Naive thymus-derived CD4-positive, alpha-beta T cell (primary cell): ENCODE measurements at regions of chr20 and their contacts with region 1.

Region 1: DNA sequence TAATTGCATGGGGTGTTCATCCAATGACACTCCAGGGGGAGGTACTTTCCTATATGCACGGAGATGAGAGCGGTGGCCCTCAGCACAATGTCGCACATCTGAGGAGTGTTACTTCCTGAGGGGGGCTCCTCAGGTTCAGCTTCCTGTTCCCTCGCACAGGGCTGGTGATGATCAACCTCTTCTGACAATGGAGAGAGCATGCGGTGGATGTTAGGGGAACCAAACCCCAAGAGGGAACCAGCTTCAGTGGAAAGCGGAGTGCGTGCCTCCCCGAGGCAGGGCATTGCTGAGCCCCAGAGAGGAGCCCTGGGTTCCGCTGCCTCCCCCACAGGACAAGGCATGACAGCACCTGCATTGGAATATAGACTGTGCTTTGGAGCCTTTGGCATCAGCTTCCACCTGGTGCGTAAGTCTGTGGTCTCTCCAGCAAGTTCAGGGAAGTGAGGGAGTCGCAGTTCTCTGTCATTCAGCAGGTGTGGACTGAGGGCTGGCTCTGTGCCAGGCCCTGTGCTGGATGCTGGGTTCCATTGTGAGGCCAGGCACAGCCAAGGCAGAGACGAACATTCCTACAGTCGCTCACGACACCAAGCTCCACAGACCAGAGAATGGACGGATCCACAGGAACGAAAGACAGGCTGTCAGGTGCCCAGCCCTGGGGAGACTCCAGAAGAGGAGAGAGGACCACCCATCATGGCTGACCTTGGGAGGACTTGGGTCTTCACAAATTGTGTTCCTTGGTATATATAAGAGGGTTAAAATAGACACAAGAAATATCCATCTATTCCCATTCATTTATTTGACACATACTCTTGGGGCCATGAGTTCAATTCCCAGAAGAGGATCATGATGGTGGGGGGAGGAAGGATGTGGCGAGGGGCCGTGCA is 3.9 kb upstream of the ZNF831 start:
- DNase-seq: peak in 8 of 9 donors; percentile 50 to 86 (median 82)
- ATAC-seq: peak; percentile 93
- H3K4me3 ChIP-seq: peak overlapping the region; percentile 55
- H3K4me3 Mint-ChIP-seq: peak overlapping the region; percentile 76 to 93 (median 89)
- H3K27ac ChIP-seq: peak overlapping the region; percentile 93
- H3K27ac Mint-ChIP-seq: peak overlapping the region; percentile 95 to 99 (median 98)
- H3K4me1 ChIP-seq: peaks cover 55 to 79% of the 10 kb centered on the region in 2 donors
- H3K4me1 Mint-ChIP-seq: peaks cover 49 to 95% (median 89%) of the 10 kb centered on the region in 7 donors
- H3K27me3 ChIP-seq: no peaks in the 10 kb centered on the region
- H3K27me3 Mint-ChIP-seq: no peaks in the 10 kb centered on the region

Region 2: GRCh38 chr20:58818585-58819285 is 341.0 kb before region 1 on chr20:
- CTCF ChIA-PET with region 1: no interaction called
- POLR2A ChIA-PET with region 1: no interaction called
- intact Hi-C with region 1: no loop called
- DNase-seq: peak in 1 of 9 donors; percentile 74
- ATAC-seq: no peak
- H3K4me3 ChIP-seq: no peak overlapping the region
- H3K4me3 Mint-ChIP-seq: no peak overlapping the region
- H3K27ac ChIP-seq: no peak overlapping the region
- H3K27ac Mint-ChIP-seq: no peak overlapping the region
- H3K4me1 ChIP-seq: no peaks in the 10 kb centered on the region
- H3K4me1 Mint-ChIP-seq: peaks cover 0 to 11% (median 0%) of the 10 kb centered on the region in 7 donors
- H3K27me3 ChIP-seq: no peaks in the 10 kb centered on the region
- H3K27me3 Mint-ChIP-seq: peaks cover 0 to 14% (median 4%) of the 10 kb centered on the region in 5 donors

Region 3: GRCh38 chr20:59020938-59021551 is 138.7 kb before region 1 on chr20:
- CTCF ChIA-PET with region 1: no interaction called
- POLR2A ChIA-PET with region 1: no interaction called
- intact Hi-C with region 1: no loop called
- DNase-seq: no peak
- ATAC-seq: no peak
- H3K4me3 ChIP-seq: no peak overlapping the region
- H3K4me3 Mint-ChIP-seq: no peak overlapping the region
- H3K27ac ChIP-seq: no peak overlapping the region
- H3K27ac Mint-ChIP-seq: peak overlapping the region in 1 of 9 donors; percentile 67
- H3K4me1 ChIP-seq: peaks cover 0 to 12% of the 10 kb centered on the region in 2 donors
- H3K4me1 Mint-ChIP-seq: peaks cover 24 to 36% (median 32%) of the 10 kb centered on the region in 7 donors
- H3K27me3 ChIP-seq: no peaks in the 10 kb centered on the region
- H3K27me3 Mint-ChIP-seq: no peaks in the 10 kb centered on the region

Region 4: GRCh38 chr20:59042796-59043660 is 116.7 kb before region 1 on chr20:
- CTCF ChIA-PET with region 1: no interaction called
- POLR2A ChIA-PET with region 1: no interaction called
- intact Hi-C with region 1: loop called in 1 of 2 experiments (anchors 2 kb)
- DNase-seq: peak; percentile 90 to 98 (median 94)
- ATAC-seq: peak; percentile 98
- H3K4me3 ChIP-seq: peak overlapping the region; percentile 76
- H3K4me3 Mint-ChIP-seq: peak overlapping the region; percentile 81 to 96 (median 90)
- H3K27ac ChIP-seq: peak overlapping the region; percentile 93
- H3K27ac Mint-ChIP-seq: peak overlapping the region; percentile 76 to 96 (median 91)
- H3K4me1 ChIP-seq: peaks cover 30 to 32% of the 10 kb centered on the region in 2 donors
- H3K4me1 Mint-ChIP-seq: peaks cover 35 to 54% (median 50%) of the 10 kb centered on the region in 7 donors
- H3K27me3 ChIP-seq: no peaks in the 10 kb centered on the region
- H3K27me3 Mint-ChIP-seq: no peaks in the 10 kb centered on the region

Region 5: DNA sequence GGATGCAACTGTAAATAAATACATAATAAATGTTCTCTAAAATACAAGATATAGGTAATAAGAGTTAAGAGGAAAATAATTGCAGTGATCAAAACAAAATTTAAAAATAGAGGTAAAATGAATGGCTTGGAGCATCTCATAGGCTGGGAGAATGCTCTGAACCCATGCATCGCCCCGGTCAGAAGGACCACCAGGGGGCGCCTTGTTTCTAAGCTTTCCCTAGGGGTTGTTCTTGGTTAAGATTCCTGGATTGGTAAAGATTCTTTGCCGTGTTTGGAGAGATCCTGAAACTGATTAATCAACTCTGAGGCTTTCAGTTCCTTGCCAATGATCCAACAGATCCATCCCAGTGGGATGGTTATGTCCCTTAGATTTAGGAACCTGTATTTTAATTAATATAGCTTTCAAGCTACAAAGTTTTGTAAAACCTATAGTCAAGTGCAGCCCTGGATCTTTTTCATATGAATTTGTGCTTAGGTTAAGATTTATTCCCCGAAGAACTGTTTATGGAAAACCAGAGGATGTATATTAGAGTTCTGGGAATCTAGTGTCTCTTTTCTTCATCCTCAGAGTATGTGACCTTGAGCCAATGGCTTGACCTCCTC is 71.8 kb before region 1 on chr20:
- CTCF ChIA-PET with region 1: interaction called, 9 read pairs
- POLR2A ChIA-PET with region 1: interaction called, 7 read pairs
- intact Hi-C with region 1: loop called (anchors 1 to 5 kb)
- DNase-seq: peak; percentile 67 to 85 (median 78)
- ATAC-seq: peak; percentile 92
- H3K4me3 ChIP-seq: no peak overlapping the region
- H3K4me3 Mint-ChIP-seq: no peak overlapping the region
- H3K27ac ChIP-seq: no peak overlapping the region
- H3K27ac Mint-ChIP-seq: peak overlapping the region in 4 of 9 donors; percentile 10 to 58 (median 40)
- H3K4me1 ChIP-seq: peaks cover 0 to 5% of the 10 kb centered on the region in 2 donors
- H3K4me1 Mint-ChIP-seq: peaks cover 0 to 7% (median 5%) of the 10 kb centered on the region in 7 donors
- H3K27me3 ChIP-seq: no peaks in the 10 kb centered on the region
- H3K27me3 Mint-ChIP-seq: peaks cover 0 to 32% (median 0%) of the 10 kb centered on the region in 5 donors

Region 6: DNA sequence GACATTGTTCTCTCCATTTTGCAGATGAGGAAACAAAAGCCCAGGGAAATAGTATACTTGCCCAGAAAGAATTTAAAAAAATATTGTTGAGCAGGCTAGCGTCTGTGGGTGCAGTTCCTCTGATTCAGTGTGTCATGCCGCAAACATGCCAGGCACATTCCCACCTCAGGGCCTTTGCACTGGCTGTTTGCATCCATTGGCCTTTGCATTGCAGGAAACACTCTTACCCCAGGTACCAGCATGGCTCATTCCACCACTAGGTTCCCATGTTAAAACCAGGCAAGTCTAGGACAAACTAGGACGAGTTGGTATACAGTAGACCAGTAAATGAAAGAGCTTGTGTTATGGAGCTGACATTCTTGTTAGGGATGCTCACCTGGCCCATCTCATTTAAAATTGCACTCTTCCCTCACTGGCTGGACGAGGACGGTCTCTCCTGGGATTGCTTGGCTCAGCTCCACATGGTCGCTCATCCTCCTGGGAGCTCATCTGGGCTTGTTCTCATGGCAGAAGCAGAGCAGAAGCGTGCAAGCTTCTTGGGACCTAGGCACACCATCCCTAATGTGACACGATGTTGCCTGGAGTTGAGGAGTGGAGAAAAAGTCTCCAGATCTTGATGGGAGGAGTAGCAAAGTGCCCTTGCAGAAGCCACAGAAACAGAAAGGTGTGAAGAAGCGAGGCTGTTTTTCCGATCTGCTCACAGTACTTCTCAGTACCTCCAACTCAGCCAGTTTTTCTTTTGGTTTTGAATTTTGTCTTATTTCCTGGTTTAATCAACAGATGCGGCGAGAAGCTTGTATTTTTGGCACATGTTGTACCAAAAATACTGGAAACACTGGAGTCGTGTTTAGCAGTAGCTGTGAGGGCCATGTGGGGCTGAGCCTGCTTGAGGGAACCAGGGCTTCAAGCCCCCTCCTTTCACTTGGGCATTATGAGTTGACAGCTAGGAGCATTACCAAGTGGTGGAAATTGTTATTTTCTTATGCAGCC is 17.8 kb after region 1 on chr20:
- CTCF ChIA-PET with region 1: interaction called, 3 read pairs
- POLR2A ChIA-PET with region 1: interaction called, 16 read pairs
- intact Hi-C with region 1: loop called in 1 of 2 experiments (anchors 2 kb)
- DNase-seq: peak in 4 of 9 donors; percentile 28 to 46 (median 32)
- ATAC-seq: peak; percentile 75
- H3K4me3 ChIP-seq: peak overlapping the region; percentile 32
- H3K4me3 Mint-ChIP-seq: peak overlapping the region; percentile 40 to 83 (median 74)
- H3K27ac ChIP-seq: peak overlapping the region; percentile 71
- H3K27ac Mint-ChIP-seq: peak overlapping the region; percentile 86 to 96 (median 91)
- H3K4me1 ChIP-seq: peaks cover 72 to 81% of the 10 kb centered on the region in 2 donors
- H3K4me1 Mint-ChIP-seq: peaks cover 51 to 97% (median 88%) of the 10 kb centered on the region in 7 donors
- H3K27me3 ChIP-seq: no peaks in the 10 kb centered on the region
- H3K27me3 Mint-ChIP-seq: no peaks in the 10 kb centered on the region

Region 7: GRCh38 chr20:59253779-59254319 is 94.1 kb after region 1 on chr20:
- CTCF ChIA-PET with region 1: no interaction called
- POLR2A ChIA-PET with region 1: no interaction called
- intact Hi-C with region 1: loop called in 1 of 2 experiments (anchors 5 kb)
- DNase-seq: peak in 7 of 9 donors; percentile 10 to 41 (median 25)
- ATAC-seq: peak; percentile 63
- H3K4me3 ChIP-seq: peak overlapping the region; percentile 27
- H3K4me3 Mint-ChIP-seq: peak overlapping the region; percentile 66 to 83 (median 73)
- H3K27ac ChIP-seq: peak overlapping the region; percentile 58
- H3K27ac Mint-ChIP-seq: peak overlapping the region; percentile 83 to 97 (median 93)
- H3K4me1 ChIP-seq: peaks cover 43 to 45% of the 10 kb centered on the region in 2 donors
- H3K4me1 Mint-ChIP-seq: peaks cover 50 to 82% (median 66%) of the 10 kb centered on the region in 7 donors
- H3K27me3 ChIP-seq: no peaks in the 10 kb centered on the region
- H3K27me3 Mint-ChIP-seq: no peaks in the 10 kb centered on the region